GM12878 (cell line): ENCODE measurements at regions of chr12 and their contacts with region 1.

Region 1: DNA sequence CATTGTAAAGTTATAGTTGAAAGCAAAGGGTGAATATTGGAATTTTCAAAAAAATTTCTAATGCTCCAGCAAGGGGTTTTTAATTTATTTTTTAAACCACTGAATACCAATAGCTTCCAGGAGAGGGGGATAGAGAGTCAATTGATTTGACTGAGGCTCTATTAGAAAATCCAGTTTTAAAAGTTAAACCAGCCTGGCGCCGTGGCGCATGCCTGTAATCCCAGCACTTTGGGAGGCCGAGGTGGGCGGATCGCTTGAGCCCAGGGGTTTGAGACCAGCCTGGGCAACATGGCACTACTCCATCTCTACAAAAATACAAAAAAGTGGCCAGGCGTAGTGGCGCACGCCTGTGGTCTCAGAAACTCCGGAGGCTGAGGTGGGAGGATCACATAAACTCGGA is 150.1 kb downstream of the SLC38A4 start:
- DNase-seq: no peak
- ATAC-seq: 0 out of 3 replicates have a peak, but pooled peaks have one; percentile 29
- H3K4me3 ChIP-seq: no peak overlapping the region
- H3K27ac ChIP-seq: no peak overlapping the region
- H3K4me1 ChIP-seq: no peaks in the 10 kb centered on the region
- H3K27me3 ChIP-seq: no peaks in the 10 kb centered on the region
- CTCF ChIP-seq: peak; percentile 35 to 39 (median 35); a peak in 4 of 6 replicates
- EP300 ChIP-seq: no peak
- POLR2A ChIP-seq: no peak
- RAD21 ChIP-seq: peak; percentile 62

Region 2: DNA sequence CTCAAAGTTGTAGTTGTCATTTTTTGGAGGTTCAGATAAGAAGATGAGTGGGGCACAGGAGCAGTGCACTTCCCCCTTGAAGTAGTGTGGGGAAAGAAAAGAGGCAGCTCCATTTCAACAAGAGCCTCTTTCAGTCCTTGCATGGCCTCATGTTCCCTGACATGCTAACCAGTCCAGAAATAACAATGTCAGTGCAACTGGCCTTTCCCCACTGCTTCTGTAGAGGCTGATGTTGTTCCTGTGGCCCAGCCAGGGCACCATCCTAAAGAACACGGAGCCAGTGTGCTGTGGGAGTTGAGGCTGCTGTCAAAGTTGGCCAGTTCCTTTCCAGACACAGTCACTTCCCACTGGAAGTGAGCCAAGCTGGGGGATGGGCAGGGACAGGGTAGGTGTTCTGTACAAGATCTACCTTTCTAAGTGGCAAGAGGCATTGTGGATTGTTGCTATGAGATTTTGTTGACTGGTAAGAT is 225.4 kb before region 1 on chr12:
- CTCF ChIA-PET with region 1: no interaction called
- POLR2A ChIA-PET with region 1: no interaction called
- RAD21 ChIA-PET with region 1: no interaction called
- SMC1A ChIA-PET with region 1: no interaction called
- in situ Hi-C with region 1: no loop called
- intact Hi-C with region 1: no loop called
- DNase-seq: no peak
- ATAC-seq: no peak
- H3K4me3 ChIP-seq: no peak overlapping the region
- H3K27ac ChIP-seq: no peak overlapping the region
- H3K4me1 ChIP-seq: no peaks in the 10 kb centered on the region; the same call in 1 of the 2 replicates
- H3K27me3 ChIP-seq: no peaks in the 10 kb centered on the region
- CTCF ChIP-seq: no peak
- EP300 ChIP-seq: no peak
- POLR2A ChIP-seq: no peak
- RAD21 ChIP-seq: no peak

Region 3: DNA sequence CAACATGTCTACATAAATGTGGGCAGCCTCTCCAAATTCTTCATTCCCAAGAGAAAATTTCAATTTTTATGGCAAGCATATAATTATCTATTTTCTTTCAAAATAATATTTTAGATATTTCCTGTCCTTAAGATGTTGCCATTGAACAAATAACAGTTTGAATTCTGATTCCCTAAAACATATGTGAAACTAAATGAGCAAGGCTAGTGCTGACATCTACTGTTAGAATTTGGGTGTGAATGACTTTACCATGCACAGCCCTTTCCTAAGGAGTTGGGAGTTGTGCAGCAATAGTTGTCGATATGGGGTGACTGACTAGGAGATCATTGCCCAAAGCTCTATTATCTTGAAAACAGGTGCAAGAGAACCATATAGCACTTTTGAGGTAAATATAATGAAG is 258.2 kb after region 1 on chr12:
- CTCF ChIA-PET with region 1: interaction called, 7 read pairs
- POLR2A ChIA-PET with region 1: no interaction called
- RAD21 ChIA-PET with region 1: interaction called, 3 read pairs
- SMC1A ChIA-PET with region 1: interaction called, 4 read pairs
- in situ Hi-C with region 1: no loop called
- intact Hi-C with region 1: loop called (anchors 5 kb)
- DNase-seq: no peak
- ATAC-seq: peak; percentile 70
- H3K4me3 ChIP-seq: no peak overlapping the region
- H3K27ac ChIP-seq: no peak overlapping the region
- H3K4me1 ChIP-seq: no peaks in the 10 kb centered on the region
- H3K27me3 ChIP-seq: no peaks in the 10 kb centered on the region
- CTCF ChIP-seq: peak; percentile 23 to 56 (median 51); a peak in 5 of 6 replicates
- EP300 ChIP-seq: no peak
- POLR2A ChIP-seq: no peak
- RAD21 ChIP-seq: peak; percentile 84

Region 4: DNA sequence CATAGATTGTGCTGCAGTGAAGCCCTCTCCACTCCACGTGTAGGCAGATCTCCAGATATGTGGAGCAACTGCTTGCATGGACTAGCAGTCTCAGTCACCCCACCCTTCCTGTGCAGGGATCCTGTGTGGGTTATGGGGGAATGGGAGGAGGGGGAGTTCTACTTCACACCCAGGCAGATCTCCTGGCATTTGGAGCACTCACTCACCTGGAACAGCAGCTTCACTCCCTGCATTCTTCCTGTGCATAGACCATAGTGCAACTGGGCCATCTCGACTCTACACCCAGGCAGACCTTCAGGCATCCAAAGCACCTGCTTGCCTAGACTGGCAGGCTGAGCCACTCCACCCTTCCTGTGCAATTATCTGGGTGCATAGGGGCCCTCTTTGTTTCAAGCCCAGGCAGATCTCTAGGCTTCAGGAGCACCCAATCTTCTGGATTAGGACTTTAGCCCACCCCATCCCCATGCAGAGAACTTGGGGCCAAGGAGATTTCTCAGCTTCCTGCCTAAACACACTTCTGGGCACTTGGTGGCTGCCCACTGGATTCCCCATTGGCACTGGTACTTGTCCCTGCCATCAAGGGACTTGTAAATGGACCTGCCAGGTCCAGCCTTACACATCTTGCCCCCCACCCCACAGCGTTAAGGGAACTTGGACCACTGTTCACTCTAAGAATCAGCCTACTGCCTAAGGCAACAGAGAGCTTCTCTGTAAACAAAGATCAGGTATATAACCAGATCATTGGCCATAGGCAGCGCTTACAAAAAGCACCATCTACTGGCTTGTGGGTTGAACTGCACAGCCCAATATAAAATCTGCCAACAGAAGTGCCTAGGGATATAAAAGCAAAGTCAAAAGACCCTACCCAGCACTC is 307.9 kb after region 1 on chr12:
- CTCF ChIA-PET with region 1: interaction called, 10 read pairs
- POLR2A ChIA-PET with region 1: no interaction called
- RAD21 ChIA-PET with region 1: no interaction called
- SMC1A ChIA-PET with region 1: interaction called, 5 read pairs
- in situ Hi-C with region 1: no loop called
- intact Hi-C with region 1: no loop called
- DNase-seq: peak; percentile 2
- ATAC-seq: peak; percentile 92
- H3K4me3 ChIP-seq: no peak overlapping the region
- H3K27ac ChIP-seq: no peak overlapping the region
- H3K4me1 ChIP-seq: no peaks in the 10 kb centered on the region
- H3K27me3 ChIP-seq: no peaks in the 10 kb centered on the region
- CTCF ChIP-seq: peak; percentile 76 to 80 (median 77)
- EP300 ChIP-seq: no peak
- POLR2A ChIP-seq: no peak
- RAD21 ChIP-seq: peak; percentile 89

Region 5: GRCh38 chr12:47021298-47021697 is 345.6 kb after region 1 on chr12:
- CTCF ChIA-PET with region 1: interaction called, 7 read pairs
- POLR2A ChIA-PET with region 1: no interaction called
- RAD21 ChIA-PET with region 1: no interaction called
- SMC1A ChIA-PET with region 1: no interaction called
- in situ Hi-C with region 1: no loop called
- intact Hi-C with region 1: loop called (anchors 5 kb)
- DNase-seq: peak; percentile 11
- ATAC-seq: peak; percentile 78
- H3K4me3 ChIP-seq: no peak overlapping the region
- H3K27ac ChIP-seq: no peak overlapping the region
- H3K4me1 ChIP-seq: no peaks in the 10 kb centered on the region
- H3K27me3 ChIP-seq: no peaks in the 10 kb centered on the region
- CTCF ChIP-seq: peak; percentile 50 to 68 (median 66)
- EP300 ChIP-seq: no peak
- POLR2A ChIP-seq: no peak
- RAD21 ChIP-seq: peak; percentile 80